Caco-2 (cell line): ENCODE measurements at regions of chr14 and their contacts with region 1.

Region 1: GRCh38 chr14:57293866-57294837 is 25.4 kb downstream of the AP5M1 start:
- DNase-seq: no peak
- H3K4me3 ChIP-seq: no peak overlapping the region
- H3K4me3 Mint-ChIP-seq: no peak overlapping the region
- H3K27ac Mint-ChIP-seq: no peak overlapping the region
- H3K4me1 ChIP-seq: peaks cover 29% of the 10 kb centered on the region
- H3K4me1 Mint-ChIP-seq: no peaks in the 10 kb centered on the region
- H3K27me3 ChIP-seq: no peaks in the 10 kb centered on the region
- H3K27me3 Mint-ChIP-seq: no peaks in the 10 kb centered on the region
- CTCF ChIP-seq: peak in 1 of 2 experiments; percentile 25

Region 2: DNA sequence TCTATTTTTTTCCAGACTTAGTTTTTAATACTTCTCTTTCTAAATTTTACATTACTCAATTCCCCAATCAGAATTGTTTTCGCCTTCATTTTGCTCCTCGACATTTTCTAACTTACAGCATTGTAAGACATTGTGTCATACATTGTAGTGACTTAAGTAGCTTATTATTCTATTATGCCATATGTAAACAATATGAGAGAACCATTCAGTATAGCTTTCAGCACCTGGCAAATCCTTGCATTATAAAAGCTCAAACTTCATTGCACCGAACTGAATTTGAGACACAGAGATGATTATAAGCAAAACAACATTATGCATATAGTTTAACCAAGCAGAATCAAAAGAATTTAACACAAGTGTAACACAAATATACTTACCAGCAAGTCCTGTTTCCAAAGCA is 72.2 kb before region 1 on chr14:
- CTCF ChIA-PET with region 1: no interaction called
- POLR2A ChIA-PET with region 1: no interaction called
- intact Hi-C with region 1: loop called (anchors 5 kb)
- DNase-seq: no peak
- H3K4me3 ChIP-seq: no peak overlapping the region
- H3K4me3 Mint-ChIP-seq: no peak overlapping the region
- H3K27ac Mint-ChIP-seq: no peak overlapping the region
- H3K4me1 ChIP-seq: no peaks in the 10 kb centered on the region
- H3K4me1 Mint-ChIP-seq: no peaks in the 10 kb centered on the region
- H3K27me3 ChIP-seq: no peaks in the 10 kb centered on the region
- H3K27me3 Mint-ChIP-seq: no peaks in the 10 kb centered on the region
- CTCF ChIP-seq: no peak

Region 3: GRCh38 chr14:57268161-57269069 is 25.7 kb before region 1 on chr14 and contains the starts of genes AP5M1 and EXOC5:
- CTCF ChIA-PET with region 1: interaction called, 7 read pairs
- POLR2A ChIA-PET with region 1: interaction called, 4 read pairs
- intact Hi-C with region 1: loop called (anchors 1 kb)
- DNase-seq: peak; percentile 91 to 93
- H3K4me3 ChIP-seq: peak within 1 kb of the TSS; percentile 79
- H3K4me3 Mint-ChIP-seq: peak within 1 kb of the TSS; percentile 99
- H3K27ac Mint-ChIP-seq: peak within 1 kb of the TSS; percentile 99
- H3K4me1 ChIP-seq: peaks cover 45% of the 10 kb centered on the region
- H3K4me1 Mint-ChIP-seq: peaks cover 35% of the 10 kb centered on the region
- H3K27me3 ChIP-seq: no peaks in the 10 kb centered on the region
- H3K27me3 Mint-ChIP-seq: no peaks in the 10 kb centered on the region
- CTCF ChIP-seq: peak in 1 of 2 experiments; percentile 5
- total RNA-seq, gene AP5M1: 39.4 and 47.8 TPM in 2 replicates
- total RNA-seq, gene EXOC5: 66.5 and 69.8 TPM in 2 replicates